ENCODE measurements at regions of chr14 and their contacts with region 1.

Region 1: DNA sequence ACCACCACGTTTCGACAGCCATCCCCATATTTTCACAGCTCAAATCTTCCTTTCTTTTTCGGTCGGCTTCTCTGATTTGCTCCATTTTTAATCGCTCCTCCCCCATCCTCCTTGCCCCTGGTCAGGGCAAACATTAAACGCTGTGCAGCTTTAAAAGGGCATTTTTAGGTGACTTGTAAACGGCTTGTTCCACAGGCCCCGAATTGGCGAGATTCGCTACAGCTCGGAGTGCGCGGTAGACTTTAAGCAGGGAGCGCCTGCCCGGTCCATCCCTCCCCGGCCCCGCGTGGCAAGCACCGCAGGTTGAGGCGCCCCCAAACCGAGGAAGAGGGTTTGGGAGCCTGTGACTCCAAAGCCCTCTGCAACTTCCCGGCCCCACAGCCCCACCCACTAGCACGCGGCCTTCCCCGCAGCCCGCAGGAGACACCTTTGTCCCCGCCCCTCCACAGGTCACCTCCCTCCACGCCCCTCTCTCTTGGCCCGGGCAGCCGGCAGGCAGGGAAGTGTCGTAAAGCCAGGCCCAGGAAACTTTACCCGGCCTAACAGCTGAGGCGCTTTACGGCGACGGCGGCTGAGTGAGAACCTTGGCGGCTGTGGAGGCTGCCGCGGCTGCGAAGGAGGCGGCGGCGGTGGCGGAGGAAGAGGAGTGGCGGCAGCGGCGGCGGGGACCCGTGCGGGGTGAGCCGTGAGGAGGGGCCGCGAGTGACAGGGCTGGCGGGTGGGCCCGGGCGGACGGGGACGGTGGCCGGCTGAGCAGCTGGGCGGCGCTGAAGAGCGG is at the start of gene NAA30:
- DNase-seq: peak; percentile 97
- ATAC-seq: peak; percentile 99
- total RNA-seq, gene NAA30: 22.0 TPM

Region 2: GRCh38 chr14:57268161-57269069 is 121.8 kb before region 1 on chr14 and contains the starts of genes AP5M1 and EXOC5:
- intact Hi-C with region 1: loop called (anchors 5 kb)
- DNase-seq: peak; percentile 97
- ATAC-seq: peak; percentile 97
- total RNA-seq, gene AP5M1: 42.9 TPM
- total RNA-seq, gene EXOC5: 63.3 TPM

Region 3: DNA sequence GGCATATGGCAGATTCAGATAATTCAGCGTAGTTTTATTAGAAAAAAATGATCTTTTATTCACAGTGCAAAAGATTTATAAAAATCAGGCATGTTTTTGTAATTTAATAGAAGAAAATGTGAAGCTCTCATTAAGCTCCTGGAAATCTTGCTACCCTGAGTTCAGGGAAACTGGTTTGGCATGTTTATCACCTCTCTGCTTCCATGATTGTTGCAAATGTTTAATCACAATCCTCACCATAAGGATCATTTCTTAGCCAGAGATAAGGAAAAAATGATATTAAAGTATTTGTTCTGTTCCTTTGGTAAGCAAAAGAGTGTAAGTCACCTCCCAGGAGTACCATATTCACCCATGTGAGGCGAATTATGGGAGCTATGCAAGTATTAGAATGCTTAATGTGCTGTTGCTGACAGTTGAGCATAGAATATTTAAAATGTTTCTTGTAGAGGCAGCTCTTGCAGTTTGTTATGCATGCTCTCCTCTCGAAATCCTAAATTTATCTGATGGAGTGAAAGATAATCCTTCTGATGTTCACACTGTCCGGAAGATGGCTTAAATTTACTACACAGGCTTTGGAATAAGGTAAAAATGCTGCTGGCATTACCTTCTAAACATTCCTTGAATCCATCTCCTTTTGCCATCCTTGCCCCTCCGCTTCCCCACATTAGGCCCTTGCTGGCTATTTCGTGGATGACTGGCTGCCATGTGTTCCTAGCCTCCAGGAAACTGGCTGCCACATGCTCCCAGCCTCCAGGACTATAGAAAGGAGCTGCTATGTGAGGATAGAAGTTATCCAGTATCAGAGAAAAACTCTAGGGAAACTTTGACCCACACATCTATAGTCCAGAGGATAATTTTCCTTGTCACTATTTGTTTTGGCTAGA is 219.2 kb after region 1 on chr14:
- intact Hi-C with region 1: no loop called
- DNase-seq: no peak
- ATAC-seq: no peak

Measured in Right ventricle myocardium inferior (tissue), 1 donor.